ENCODE measurements at regions of chr11 and their contacts with region 1.

Region 1: DNA sequence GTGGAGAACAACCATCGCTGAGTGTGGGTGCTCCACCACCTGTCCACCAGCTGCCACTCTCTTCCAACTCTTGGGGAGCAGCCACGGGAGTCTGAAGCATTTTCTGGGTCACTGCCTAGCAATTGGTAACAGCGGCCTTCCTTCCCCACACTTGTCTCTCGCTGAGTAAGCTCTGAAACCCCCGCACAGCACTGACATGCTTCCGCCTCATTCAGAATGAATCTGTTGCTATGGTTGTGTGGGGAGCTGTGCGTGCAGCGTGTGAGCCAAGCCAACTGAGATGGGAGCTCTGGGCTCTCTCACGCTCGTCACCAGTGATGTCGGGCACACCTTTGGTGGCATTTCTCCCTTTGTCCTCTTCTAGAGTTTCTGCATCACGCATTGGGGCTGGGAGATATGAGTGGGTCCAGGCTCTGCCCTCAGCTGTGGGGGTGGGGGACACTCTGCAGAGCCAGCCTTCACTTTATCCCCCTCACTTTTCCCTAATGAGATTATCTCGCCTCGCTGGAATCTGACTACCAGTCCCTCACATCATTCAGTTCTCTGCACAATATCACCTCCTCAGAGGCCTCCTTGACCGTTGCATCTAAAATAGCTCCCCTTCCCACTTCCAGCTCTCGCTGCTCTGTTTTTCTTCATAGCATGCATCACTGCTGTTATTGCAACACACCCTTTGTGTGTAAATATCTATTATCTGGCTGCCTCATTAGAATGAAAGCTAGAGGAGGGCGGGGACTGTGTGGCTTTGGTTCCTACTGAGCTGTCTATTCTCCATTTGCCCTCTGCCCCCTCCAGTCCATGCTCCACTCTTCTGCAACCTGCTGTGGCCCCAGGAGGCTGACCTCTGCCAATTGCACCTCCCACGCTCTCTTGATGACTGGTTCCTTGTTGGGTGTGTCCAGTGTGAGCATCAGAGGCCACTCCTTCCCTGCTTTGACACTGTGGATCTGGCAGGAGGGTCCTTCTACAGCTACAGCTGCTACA is 569.9 kb upstream of the CADM1 start:
- DNase-seq: no peak
- H3K4me3 ChIP-seq: no peak overlapping the region
- H3K27ac ChIP-seq: no peak overlapping the region
- H3K4me1 ChIP-seq: no peaks in the 10 kb centered on the region
- H3K27me3 ChIP-seq: no peaks in the 10 kb centered on the region
- CTCF ChIP-seq: no peak
- POLR2A ChIP-seq: no peak

Region 2: GRCh38 chr11:115112754-115113153 is 961.4 kb before region 1 on chr11:
- intact Hi-C with region 1: no loop called
- DNase-seq: no peak
- H3K4me3 ChIP-seq: no peak overlapping the region
- H3K27ac ChIP-seq: no peak overlapping the region
- H3K4me1 ChIP-seq: no peaks in the 10 kb centered on the region
- H3K27me3 ChIP-seq: no peaks in the 10 kb centered on the region
- CTCF ChIP-seq: no peak
- POLR2A ChIP-seq: no peak

Region 3: GRCh38 chr11:116107229-116107628 is 33.1 kb after region 1 on chr11:
- intact Hi-C with region 1: loop called (anchors 1 kb)
- DNase-seq: no peak
- H3K4me3 ChIP-seq: no peak overlapping the region
- H3K27ac ChIP-seq: no peak overlapping the region
- H3K4me1 ChIP-seq: no peaks in the 10 kb centered on the region
- H3K27me3 ChIP-seq: no peaks in the 10 kb centered on the region
- CTCF ChIP-seq: no peak
- POLR2A ChIP-seq: no peak

Region 4: DNA sequence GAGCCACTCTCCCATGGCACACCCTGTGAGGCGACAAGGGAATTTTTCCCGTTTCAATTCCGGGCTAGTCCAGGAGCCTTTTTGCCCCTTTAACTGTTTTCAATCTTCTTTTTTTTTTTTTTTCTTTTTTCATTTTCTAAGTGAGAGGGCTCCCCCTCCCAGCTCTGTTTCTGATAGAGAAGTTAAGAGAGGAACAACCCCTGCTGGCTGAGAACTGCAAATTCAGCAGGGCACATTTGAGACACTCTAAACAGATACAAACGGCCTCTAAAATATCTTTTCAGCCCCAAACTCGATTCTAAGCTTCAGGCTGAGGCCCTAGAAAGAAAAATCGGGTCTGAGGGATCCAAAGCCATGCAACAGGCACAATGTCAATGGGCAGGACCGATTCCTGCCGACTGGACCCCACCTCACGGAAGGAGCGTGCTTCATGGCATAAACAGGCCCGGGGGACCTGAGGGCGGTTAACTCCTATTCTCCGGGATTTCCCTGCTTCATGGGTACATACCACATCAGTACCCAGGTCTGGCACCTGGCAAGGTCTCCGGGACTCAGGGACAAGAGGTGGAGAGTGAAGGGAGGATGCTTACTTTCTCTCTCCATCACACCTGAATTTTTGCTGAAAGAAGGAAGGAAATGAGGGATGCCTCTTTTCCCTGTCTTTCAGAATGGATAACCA is 71.2 kb after region 1 on chr11:
- intact Hi-C with region 1: no loop called
- DNase-seq: peak in 1 of 2 donors; percentile 67
- H3K4me3 ChIP-seq: no peak overlapping the region
- H3K27ac ChIP-seq: no peak overlapping the region
- H3K4me1 ChIP-seq: no peaks in the 10 kb centered on the region
- H3K27me3 ChIP-seq: no peaks in the 10 kb centered on the region
- CTCF ChIP-seq: no peak
- POLR2A ChIP-seq: no peak

Region 5: DNA sequence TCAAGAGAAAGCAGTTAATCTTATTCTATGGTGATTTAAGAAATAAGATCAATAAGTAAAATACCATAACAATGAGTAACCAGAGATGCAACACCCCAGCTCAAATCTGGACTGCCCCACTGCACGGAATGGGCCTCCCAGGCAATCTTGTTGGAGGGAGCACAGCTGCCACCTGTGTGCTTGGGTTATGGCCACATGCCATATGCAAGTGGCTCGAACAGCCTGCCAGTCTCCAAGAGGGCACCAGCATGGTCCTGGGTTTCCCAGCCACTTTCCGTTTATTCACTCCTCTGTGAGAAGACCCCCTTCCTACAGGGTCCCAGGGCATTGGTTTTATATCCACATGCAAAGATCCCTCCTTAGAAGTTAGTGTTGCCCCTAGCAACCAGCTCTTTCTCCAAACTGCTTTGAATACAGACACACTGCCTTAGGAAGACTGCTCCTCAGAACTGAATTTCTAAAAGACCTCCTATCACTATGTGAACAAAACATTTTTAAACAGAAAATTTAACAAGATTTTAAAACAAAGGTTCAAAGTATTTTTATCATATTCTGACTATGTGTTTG is 210.9 kb after region 1 on chr11:
- intact Hi-C with region 1: no loop called
- DNase-seq: no peak
- H3K4me3 ChIP-seq: no peak overlapping the region
- H3K27ac ChIP-seq: no peak overlapping the region
- H3K4me1 ChIP-seq: no peaks in the 10 kb centered on the region
- H3K27me3 ChIP-seq: no peaks in the 10 kb centered on the region
- CTCF ChIP-seq: no peak
- POLR2A ChIP-seq: no peak

Measured in vagina (tissue), 2 donors.